Right ventricle myocardium inferior (tissue), 1 donor: ENCODE measurements at regions of chr17 and their contacts with region 1.

Region 1: GRCh38 chr17:82153745-82154375 is 55.8 kb upstream of the FASN start:
- DNase-seq: peak; percentile 92
- ATAC-seq: peak; percentile 92

Region 2: DNA sequence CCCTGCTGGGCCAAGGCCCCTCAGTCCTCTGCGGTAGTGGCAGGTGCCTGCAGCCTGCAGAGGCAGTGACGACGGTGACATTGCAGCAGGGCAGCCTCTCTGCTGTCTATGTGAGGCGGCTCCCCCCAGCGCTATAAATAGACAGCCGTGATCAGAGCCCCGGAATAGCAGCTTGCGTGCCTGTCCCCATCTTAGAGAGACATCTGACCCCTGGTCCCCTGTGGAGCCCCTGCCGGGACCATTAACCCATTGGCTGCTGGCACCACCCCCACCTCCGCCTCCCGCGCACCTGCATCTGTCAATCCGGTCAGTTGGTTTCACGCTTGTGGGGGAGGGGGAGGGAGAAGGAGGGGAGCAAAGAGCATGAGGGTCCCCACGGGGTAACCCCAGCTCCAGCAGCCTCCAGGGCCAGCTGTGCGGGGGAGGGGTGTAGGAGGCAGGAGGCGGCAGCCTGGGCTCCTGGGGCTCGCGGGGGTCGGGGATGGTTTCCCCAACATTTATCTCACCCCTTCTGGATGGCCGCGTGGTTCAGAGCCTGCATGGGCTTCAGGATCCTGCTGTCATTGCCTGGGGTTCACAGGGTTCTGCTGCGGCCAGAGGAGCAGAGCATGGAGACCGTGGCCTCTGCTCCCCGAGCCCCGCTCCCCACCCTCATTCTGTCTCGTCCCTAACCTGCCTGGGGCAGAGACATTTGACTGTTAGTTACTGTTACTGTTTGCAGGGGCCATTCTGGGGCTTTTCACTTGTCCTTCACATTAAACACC is 211.9 kb before region 1 on chr17:
- intact Hi-C with region 1: no loop called
- DNase-seq: peak; percentile 73
- ATAC-seq: peak; percentile 26

Region 3: GRCh38 chr17:81959362-81960129 is 194.3 kb before region 1 on chr17:
- intact Hi-C with region 1: loop called (anchors 5 kb)
- DNase-seq: peak; percentile 92
- ATAC-seq: peak; percentile 90

Region 4: DNA sequence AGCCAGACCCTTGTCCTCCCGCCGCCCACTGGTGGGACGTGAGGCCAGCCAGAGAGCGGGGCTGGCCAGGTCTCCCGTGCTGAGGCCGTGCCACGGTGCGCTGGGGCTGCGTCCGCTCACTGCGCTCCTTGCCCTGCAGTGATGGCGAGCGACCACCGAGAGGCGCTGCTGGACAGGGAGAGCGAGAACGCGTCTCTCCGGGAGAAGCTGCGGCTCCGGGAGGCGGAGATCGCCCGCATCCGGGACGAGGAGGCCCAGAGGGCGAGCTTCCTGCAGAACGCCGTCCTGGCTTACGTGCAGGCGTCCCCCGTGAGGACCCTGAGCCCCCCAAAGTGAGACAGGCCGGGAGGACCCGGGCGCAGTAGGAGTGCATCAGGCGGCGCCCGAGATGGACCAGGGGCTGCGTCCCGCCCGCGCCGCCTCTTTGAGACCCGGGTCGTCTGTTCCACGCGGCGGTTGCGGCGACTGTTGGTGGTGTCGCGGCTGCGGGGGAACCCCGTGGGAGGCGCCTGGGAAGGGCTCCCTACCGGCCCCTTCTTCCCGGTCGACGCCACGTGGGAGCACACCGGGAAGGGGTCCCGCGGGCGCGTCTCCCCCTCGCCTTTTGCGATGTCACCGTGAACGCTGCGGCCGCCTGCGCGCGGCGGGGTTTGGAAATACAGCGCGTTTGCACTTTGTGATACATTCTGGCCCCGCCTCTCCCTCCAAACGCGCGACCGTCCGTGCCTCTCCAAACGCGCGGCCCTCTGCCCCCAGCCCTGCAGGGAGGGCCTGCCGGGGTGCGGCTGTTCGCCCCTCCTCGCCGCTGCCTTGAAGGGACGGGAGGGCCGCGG is 123.2 kb before region 1 on chr17:
- intact Hi-C with region 1: loop called (anchors 1 kb)
- DNase-seq: peak; percentile 92
- ATAC-seq: peak; percentile 85

Region 5: GRCh38 chr17:82188001-82188961 is 34.4 kb after region 1 on chr17:
- intact Hi-C with region 1: no loop called
- DNase-seq: no peak
- ATAC-seq: no peak